Activated naive CD4-positive, alpha-beta T cell treated with anti-CD3 and anti-CD28 coated beads for 36 hours (primary cell): ENCODE measurements at regions of chr5 and their contacts with region 1.

Region 1: DNA sequence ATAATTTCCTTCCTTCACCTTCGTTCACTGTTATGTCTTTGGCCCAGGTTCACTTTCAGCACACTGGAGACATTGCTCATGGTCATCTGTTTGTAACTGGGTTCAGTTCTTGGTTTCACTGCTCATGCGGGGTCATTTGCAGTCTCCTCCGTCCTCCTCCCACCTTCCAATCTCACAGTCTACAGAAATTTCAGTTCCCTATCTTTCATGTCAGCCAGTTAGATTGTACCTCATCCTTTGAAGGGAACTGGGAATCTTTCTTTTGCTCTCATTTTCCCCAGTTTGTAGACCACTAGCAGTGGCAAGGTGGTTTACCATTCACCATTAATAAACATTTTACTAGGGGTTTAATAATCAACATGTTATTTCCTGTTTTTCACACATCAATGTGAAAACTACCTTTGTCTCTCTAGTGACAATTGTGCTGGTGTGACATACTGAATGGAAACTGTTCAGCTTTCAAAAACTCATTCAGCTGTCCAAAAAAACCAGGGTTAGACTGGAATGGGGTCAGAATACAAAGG is 100.9 kb upstream of the IL6ST start:
- DNase-seq: no peak
- H3K4me3 Mint-ChIP-seq: peak overlapping the region; percentile 55
- H3K27ac Mint-ChIP-seq: peak overlapping the region; percentile 97
- H3K4me1 Mint-ChIP-seq: peaks cover 92% of the 10 kb centered on the region
- H3K27me3 Mint-ChIP-seq: no peaks in the 10 kb centered on the region

Region 2: GRCh38 chr5:55966284-55966683 is 129.4 kb before region 1 on chr5:
- CTCF ChIA-PET with region 1: no interaction called
- intact Hi-C with region 1: no loop called
- DNase-seq: peak; percentile 35
- H3K4me3 Mint-ChIP-seq: no peak overlapping the region
- H3K27ac Mint-ChIP-seq: peak overlapping the region; percentile 78
- H3K4me1 Mint-ChIP-seq: peaks cover 54% of the 10 kb centered on the region
- H3K27me3 Mint-ChIP-seq: no peaks in the 10 kb centered on the region

Region 3: DNA sequence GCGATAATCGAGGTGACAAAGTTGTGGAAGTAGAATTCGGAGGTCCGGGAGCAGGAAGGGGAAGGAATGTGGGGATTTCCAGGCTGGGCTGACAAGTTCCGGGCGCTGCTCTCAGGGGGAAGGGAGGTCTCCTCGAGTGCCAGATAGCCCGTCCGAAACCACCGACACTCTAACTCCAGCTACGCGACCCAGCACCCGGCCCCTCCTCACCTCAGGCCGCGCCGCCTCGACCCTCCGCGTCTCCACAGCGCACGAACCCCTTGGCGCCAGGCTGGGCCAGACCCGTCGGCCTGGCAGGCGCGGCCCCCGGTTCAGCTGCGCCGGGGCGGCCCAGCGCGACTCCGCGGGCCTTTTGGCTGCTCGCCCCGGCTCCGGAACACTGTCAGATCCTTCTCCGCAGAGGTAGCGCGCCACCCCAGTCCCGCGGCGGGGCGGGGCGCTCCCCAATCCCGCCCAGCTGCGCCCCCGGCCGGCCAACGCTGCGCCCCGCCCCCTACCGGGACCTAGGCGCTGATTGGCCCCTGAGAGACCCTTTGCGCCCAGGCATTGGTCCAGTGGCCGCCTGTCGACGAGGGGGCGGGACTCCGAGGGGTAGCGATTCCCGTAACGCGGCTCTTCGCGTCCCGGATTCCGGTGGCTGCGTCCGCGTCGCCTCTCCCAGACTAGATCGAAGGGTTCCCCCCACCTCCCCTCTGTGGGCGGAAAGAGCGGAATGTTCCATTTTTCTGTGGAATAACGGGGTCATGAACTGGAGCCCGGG is 100.9 kb before region 1 on chr5 and contains the start of gene IL6ST:
- CTCF ChIA-PET with region 1: interaction called, 4 read pairs
- intact Hi-C with region 1: loop called (anchors 1 kb)
- DNase-seq: peak; percentile 97
- H3K4me3 Mint-ChIP-seq: peak within 1 kb of the TSS; percentile 100
- H3K27ac Mint-ChIP-seq: peak within 1 kb of the TSS; percentile 100
- H3K4me1 Mint-ChIP-seq: peaks cover 53% of the 10 kb centered on the region
- H3K27me3 Mint-ChIP-seq: no peaks in the 10 kb centered on the region
- total RNA-seq, gene IL6ST: 93.4 to 103 TPM

Region 4: GRCh38 chr5:56056875-56057274 is 38.8 kb before region 1 on chr5:
- CTCF ChIA-PET with region 1: interaction called, 3 read pairs
- intact Hi-C with region 1: loop called (anchors 1 kb)
- DNase-seq: no peak
- H3K4me3 Mint-ChIP-seq: peak overlapping the region; percentile 56
- H3K27ac Mint-ChIP-seq: peak overlapping the region; percentile 81
- H3K4me1 Mint-ChIP-seq: peaks cover 73% of the 10 kb centered on the region
- H3K27me3 Mint-ChIP-seq: no peaks in the 10 kb centered on the region

Region 5: GRCh38 chr5:56080375-56081052 is 15.1 kb before region 1 on chr5:
- CTCF ChIA-PET with region 1: interaction called, 4 read pairs
- intact Hi-C with region 1: loop called (anchors 1 kb)
- DNase-seq: peak; percentile 72
- H3K4me3 Mint-ChIP-seq: peak overlapping the region; percentile 5
- H3K27ac Mint-ChIP-seq: peak overlapping the region; percentile 90
- H3K4me1 Mint-ChIP-seq: peaks cover 72% of the 10 kb centered on the region
- H3K27me3 Mint-ChIP-seq: no peaks in the 10 kb centered on the region

Region 6: DNA sequence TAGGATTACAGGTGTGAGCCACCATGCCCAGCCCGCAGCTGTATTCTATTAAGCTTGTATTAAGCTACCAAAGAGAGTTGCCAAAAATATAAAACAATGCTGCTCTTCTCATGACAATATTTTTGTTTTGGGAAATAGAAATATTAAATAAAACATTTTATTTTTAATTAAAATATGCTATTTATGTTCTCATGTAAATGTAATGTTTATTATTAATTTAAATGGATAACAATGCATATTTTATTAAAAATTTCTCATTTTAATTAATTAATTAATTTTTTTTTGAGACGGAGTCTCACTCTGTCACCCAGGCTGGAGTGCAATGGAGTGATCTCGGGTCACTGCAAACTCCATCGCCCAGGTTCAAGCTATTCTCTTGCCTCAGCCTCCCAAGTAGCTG is 19.9 kb after region 1 on chr5:
- CTCF ChIA-PET with region 1: no interaction called
- intact Hi-C with region 1: no loop called
- DNase-seq: no peak
- H3K4me3 Mint-ChIP-seq: no peak overlapping the region
- H3K27ac Mint-ChIP-seq: no peak overlapping the region
- H3K4me1 Mint-ChIP-seq: peaks cover 21% of the 10 kb centered on the region
- H3K27me3 Mint-ChIP-seq: no peaks in the 10 kb centered on the region

Region 7: DNA sequence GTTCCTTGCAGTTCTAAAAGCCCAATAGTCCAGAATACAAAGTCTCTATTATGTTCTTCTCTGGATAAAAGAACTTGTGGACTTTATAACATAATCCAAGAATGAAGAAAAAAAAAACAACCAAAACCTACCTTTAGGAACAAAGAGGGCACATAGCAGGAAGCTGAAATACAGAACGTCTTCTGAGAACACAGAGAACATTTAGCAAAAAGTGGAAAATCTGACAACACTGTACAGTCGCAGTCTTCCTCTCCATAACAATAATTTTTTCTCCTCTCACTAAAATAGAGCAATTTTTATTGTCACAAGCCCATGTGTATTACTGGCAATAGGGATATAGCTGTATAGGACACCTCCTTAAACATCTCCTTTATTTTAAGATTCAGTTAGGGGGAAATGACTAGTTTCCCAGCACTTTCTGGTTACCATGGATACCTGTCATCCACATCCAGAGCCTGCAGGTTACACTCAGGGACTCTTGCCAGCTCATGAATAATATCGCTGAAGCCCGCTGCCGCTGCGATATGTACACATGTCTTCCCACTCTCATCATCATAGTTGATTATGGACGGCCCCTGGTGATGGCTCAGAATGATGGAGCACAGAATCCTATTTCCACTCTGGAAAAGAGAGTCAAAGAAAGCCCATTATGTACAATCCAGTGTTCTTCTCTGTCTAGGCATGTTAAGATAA is 31.0 kb after region 1 on chr5:
- CTCF ChIA-PET with region 1: interaction called, 5 read pairs
- intact Hi-C with region 1: loop called (anchors 1 kb)
- DNase-seq: peak; percentile 83
- H3K4me3 Mint-ChIP-seq: peak overlapping the region; percentile 74
- H3K27ac Mint-ChIP-seq: peak overlapping the region; percentile 97
- H3K4me1 Mint-ChIP-seq: peaks cover 75% of the 10 kb centered on the region
- H3K27me3 Mint-ChIP-seq: no peaks in the 10 kb centered on the region

Region 8: DNA sequence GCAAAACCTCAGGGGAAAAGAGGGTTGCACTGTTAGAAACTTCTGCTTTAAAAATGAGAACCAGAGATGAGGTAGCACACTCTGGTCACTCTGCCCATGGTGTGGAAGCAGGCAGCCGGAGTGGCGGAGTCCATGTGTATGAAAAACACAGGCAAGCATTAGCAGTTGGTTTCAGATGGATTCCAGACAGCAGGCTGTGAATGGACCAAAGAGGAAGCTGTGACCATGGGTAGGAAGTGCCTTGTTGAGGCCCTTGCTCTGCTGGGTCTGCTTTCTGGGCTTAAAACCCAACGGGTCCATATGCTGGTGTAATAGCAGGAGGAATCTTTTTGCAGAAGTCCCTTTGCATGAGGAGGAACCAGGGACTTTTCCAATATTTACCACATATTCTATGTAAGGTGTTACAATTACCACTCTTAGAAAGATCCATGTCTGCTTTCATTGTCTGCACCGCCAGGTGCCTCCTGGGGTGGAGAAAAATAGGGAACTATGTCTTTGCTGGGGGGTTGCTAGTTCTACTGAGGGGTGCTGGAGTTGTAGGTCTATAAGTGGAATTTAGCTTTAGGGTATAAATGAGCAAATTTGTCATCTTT is 60.4 kb after region 1 on chr5:
- CTCF ChIA-PET with region 1: interaction called, 8 read pairs
- intact Hi-C with region 1: loop called (anchors 1 kb)
- DNase-seq: no peak
- H3K4me3 Mint-ChIP-seq: peak overlapping the region; percentile 79
- H3K27ac Mint-ChIP-seq: peak overlapping the region; percentile 91
- H3K4me1 Mint-ChIP-seq: peaks cover 88% of the 10 kb centered on the region
- H3K27me3 Mint-ChIP-seq: no peaks in the 10 kb centered on the region

Region 9: DNA sequence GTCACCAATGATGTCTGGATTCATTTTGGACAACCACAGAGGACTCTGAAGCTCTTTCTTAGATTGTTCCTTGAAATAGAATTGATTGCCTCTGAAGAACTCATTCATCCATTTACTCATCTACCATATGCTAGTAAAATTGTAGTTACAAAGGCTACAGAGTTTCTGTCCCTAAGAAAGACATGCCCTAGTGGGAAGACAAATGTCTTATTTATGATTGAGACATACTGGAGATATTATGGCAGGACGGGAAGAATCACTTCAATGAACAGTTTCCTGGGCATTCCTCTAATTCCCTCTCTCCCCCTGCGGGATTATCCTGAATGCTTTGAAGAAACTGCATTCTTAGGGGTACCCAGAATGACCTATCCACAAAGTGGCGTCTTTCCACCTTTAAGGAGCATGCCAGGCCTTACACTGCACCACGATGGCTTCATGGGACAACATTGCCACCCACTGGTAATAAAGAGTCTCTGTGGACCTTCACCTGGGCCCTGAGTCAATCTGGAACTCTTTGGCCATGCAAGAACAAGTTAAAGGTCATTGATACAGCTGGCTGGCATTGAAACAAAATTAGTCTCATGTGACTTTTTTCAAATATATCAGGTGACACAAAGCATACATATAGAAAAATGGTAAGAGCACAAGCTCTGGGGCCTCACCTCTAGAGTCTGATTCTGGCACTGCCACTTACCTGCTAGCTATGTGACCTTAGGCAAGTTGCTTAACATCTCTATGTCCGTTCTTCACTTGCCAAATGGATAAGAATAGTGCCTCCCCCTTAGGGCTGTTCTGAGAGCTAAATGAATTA is 105.4 kb after region 1 on chr5:
- CTCF ChIA-PET with region 1: interaction called, 12 read pairs
- intact Hi-C with region 1: loop called (anchors 1 kb)
- DNase-seq: peak; percentile 83
- H3K4me3 Mint-ChIP-seq: no peak overlapping the region
- H3K27ac Mint-ChIP-seq: no peak overlapping the region
- H3K4me1 Mint-ChIP-seq: peaks cover 28% of the 10 kb centered on the region
- H3K27me3 Mint-ChIP-seq: no peaks in the 10 kb centered on the region